ENCODE measurements at regions of chr6 and their contacts with region 1.

Region 1: GRCh38 chr6:150720774-150721233 is 121.1 kb downstream of the PLEKHG1 start:
- DNase-seq: peak; percentile 94
- ATAC-seq: peak; percentile 96
- H3K4me3 ChIP-seq: 0 out of 2 replicates have a peak overlapping the region, but pooled peaks have one; percentile 7
- H3K27ac ChIP-seq: peak overlapping the region; percentile 32
- H3K4me1 ChIP-seq: peaks cover 19% of the 10 kb centered on the region
- H3K27me3 ChIP-seq: no peaks in the 10 kb centered on the region
- CTCF ChIP-seq: peak in 1 of 3 experiments; percentile 16; a peak in 1 of 6 replicates
- EP300 ChIP-seq: peak; percentile 77 to 98
- POLR2A ChIP-seq: no peak
- RAD21 ChIP-seq: peak; percentile 40

Region 2: DNA sequence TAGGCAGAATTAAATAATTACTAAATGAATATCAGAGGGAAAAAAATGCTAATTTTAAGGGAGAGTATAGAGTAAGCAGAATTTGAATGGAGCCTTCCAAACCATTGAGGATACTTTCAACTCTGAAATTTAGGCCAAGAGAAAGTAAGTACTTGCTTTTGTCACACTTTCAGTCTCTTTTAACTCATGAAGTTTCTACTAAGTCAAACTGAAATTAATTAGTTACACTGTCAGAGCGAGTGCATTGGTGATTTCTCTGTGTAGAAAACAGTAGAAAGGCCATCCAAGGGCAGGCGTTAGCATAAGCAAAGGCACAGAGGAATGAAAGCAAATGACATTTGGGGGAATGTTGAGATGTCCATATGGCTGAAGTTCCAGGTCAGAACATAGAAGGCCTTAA is 28.2 kb before region 1 on chr6:
- CTCF ChIA-PET with region 1: interaction called, 25 read pairs
- POLR2A ChIA-PET with region 1: interaction called, 3 read pairs
- RAD21 ChIA-PET with region 1: interaction called, 9 read pairs
- SMC1A ChIA-PET with region 1: interaction called, 43 read pairs
- in situ Hi-C with region 1: no loop called
- intact Hi-C with region 1: loop called (anchors 2 kb)
- DNase-seq: peak; percentile 38
- ATAC-seq: peak; percentile 89
- H3K4me3 ChIP-seq: no peak overlapping the region
- H3K27ac ChIP-seq: 0 out of 2 replicates have a peak overlapping the region, but pooled peaks have one; percentile 11
- H3K4me1 ChIP-seq: peaks cover 23% of the 10 kb centered on the region
- H3K27me3 ChIP-seq: no peaks in the 10 kb centered on the region; a peak in 1 of 4 replicates
- CTCF ChIP-seq: no peak
- EP300 ChIP-seq: peak; percentile 27 to 38; a peak in 1 of 4 replicates
- POLR2A ChIP-seq: no peak
- RAD21 ChIP-seq: no peak

Region 3: GRCh38 chr6:150732765-150733539 is 12.1 kb after region 1 on chr6:
- CTCF ChIA-PET with region 1: interaction called, 5 read pairs
- POLR2A ChIA-PET with region 1: interaction called, 8 read pairs
- RAD21 ChIA-PET with region 1: no interaction called
- SMC1A ChIA-PET with region 1: interaction called, 7 read pairs
- in situ Hi-C with region 1: no loop called
- intact Hi-C with region 1: loop called (anchors 1 kb)
- DNase-seq: peak; percentile 34
- ATAC-seq: peak; percentile 91
- H3K4me3 ChIP-seq: no peak overlapping the region
- H3K27ac ChIP-seq: no peak overlapping the region
- H3K4me1 ChIP-seq: peaks cover 5% of the 10 kb centered on the region; the same call in 1 of the 2 replicates
- H3K27me3 ChIP-seq: no peaks in the 10 kb centered on the region
- CTCF ChIP-seq: no peak
- EP300 ChIP-seq: peak in 1 of 2 experiments; percentile 24; a peak in 1 of 4 replicates
- POLR2A ChIP-seq: no peak
- RAD21 ChIP-seq: no peak